Posterior cingulate gyrus (tissue), 11 donors: ENCODE measurements at regions of chr11 and their contacts with region 1.

Region 1: GRCh38 chr11:124837491-124837856 is 27.8 kb upstream of the ROBO3 start:
- DNase-seq: no peak

Region 2: DNA sequence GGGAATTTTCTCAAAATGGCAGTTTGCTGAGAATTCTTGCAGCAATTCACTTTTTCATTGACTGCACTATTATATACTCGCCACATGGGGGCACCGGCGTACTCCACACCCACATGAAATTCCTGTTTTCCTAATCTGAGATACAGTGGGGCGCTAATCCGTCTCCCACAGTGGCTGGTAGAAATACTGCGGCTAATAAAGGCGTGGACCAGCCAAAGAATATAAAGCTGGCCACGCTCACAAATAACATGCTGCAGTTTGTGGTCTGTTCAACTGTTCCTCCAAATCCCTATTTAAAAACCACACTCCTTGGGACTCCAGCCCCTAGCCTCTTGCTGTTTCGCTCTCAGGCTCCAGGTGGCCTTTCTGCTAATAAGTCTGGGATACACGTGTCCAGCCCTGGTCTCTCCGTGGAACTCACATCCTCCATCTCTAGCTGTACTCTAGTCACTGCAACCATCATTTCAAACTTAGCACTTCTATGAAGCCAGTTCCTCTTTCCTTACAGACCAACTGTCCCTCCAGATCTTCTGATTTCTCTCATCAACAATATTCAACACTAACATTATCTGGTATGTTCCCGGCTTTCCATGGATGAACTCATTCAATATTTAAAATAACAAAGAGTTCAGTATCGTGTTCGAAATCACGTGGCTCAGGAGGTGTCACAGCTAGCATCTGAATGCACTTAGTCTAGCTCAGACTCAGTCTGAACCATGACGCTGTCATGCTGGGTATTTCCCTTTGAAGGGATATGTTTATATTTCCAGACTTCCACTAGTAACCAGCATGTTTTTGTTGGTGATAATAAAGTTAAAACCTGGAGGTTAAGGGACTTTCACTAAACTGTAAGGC is 192.8 kb before region 1 on chr11:
- intact Hi-C with region 1: loop called (anchors 5 kb)
- DNase-seq: peak; percentile 34 to 94 (median 56)

Region 3: GRCh38 chr11:124673333-124674167 is 163.9 kb before region 1 on chr11 and contains the starts of genes SIAE and SPA17:
- intact Hi-C with region 1: loop called (anchors 1 kb)
- DNase-seq: peak; percentile 72 to 98 (median 90)